Esophagus muscularis mucosa (tissue), 4 donors: ENCODE measurements at regions of chrX and their contacts with region 1.

Region 1: DNA sequence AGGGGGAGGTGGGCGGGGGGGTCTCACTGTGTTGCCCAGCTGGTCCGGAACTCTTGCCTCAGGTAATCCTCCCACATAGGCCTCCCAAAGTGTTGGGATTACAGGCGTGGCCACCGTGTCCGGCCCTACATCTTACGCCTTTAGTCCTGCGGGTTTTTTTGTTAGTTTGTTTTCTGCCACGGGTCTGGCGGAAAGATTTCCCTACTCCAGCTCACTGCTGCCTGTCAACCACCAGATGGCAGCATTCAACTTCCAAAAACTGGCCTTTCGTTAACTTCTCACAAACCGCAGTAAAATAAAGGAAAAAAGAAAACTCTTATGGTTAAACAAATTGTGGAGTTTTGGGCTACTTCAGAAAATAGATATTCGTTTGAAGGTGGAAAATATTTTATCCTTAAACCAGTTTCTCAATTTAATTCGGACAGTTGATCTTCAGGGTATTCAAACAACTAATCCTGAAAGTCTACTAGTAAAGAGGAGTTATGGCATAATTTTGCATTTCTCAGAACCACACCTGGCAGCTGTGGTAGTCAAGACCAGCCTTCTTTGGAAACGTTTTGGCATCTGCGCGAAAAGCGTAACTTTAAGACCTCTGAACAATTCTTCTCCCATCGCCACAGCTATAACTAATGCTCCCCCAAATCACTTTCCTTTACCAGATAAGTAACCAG is 41.1 kb downstream of the LUZP4 start:
- DNase-seq: no peak
- H3K4me3 ChIP-seq: peak overlapping the region in 3 of 4 donors; percentile 22 to 36 (median 32)
- H3K27ac ChIP-seq: peak overlapping the region in 1 of 4 donors; percentile 2
- H3K4me1 ChIP-seq: peaks cover 0 to 8% (median 5%) of the 10 kb centered on the region in 4 donors
- H3K27me3 ChIP-seq: no peaks in the 10 kb centered on the region
- CTCF ChIP-seq: peak; percentile 73 to 91 (median 85)
- EP300 ChIP-seq: no peak
- POLR2A ChIP-seq: no peak

Region 2: GRCh38 chrX:115560978-115561604 is 230.5 kb after region 1 on chrX and contains the start of gene PLS3:
- intact Hi-C with region 1: loop called (anchors 5 kb)
- DNase-seq: no peak
- H3K4me3 ChIP-seq: peak within 1 kb of the TSS; percentile 65 to 76 (median 71)
- H3K27ac ChIP-seq: peak within 1 kb of the TSS; percentile 87 to 92 (median 91)
- H3K4me1 ChIP-seq: peaks cover 13 to 45% (median 31%) of the 10 kb centered on the region in 4 donors
- H3K27me3 ChIP-seq: peaks cover 0 to 9% (median 0%) of the 10 kb centered on the region in 4 donors
- CTCF ChIP-seq: no peak
- EP300 ChIP-seq: no peak
- POLR2A ChIP-seq: peak; percentile 36
- total RNA-seq, gene PLS3: 76.8 to 84.0 (median 80.8) TPM

Region 3: DNA sequence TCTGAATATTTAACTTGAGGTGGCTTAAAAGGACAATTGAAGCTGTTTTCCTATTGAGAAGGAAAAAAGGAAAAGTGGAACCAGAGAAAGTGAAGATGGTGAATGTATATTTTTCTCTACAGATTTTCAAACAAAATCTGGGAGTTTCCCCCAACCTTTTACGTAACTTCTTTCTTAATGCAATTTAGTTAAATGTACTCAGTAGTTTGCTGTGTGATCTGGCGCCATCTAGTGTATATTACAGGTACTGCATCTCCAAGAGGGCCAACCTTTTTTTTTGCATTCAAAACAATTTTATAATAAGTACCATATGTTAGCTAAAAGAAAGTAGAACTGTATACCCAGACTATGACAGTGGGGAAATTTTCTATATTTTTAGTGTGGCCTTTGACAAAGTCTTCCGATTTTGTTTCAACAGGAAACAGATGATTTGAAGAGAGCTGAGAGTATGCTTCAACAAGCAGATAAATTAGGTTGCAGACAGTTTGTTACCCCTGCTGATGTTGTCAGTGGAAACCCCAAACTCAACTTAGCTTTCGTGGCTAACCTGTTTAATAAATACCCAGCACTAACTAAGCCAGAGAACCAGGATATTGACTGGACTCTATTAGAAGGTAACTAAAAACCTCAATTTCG is 312.4 kb after region 1 on chrX:
- intact Hi-C with region 1: loop called (anchors 1 kb)
- DNase-seq: no peak
- H3K4me3 ChIP-seq: no peak overlapping the region
- H3K27ac ChIP-seq: peak overlapping the region in 3 of 4 donors; percentile 8 to 53 (median 52)
- H3K4me1 ChIP-seq: peaks cover 0 to 15% (median 4%) of the 10 kb centered on the region in 4 donors
- H3K27me3 ChIP-seq: no peaks in the 10 kb centered on the region
- CTCF ChIP-seq: peak; percentile 86 to 99 (median 92)
- EP300 ChIP-seq: no peak
- POLR2A ChIP-seq: no peak

Region 4: GRCh38 chrX:115690511-115691216 is 360.0 kb after region 1 on chrX:
- intact Hi-C with region 1: loop called (anchors 2 kb)
- DNase-seq: no peak
- H3K4me3 ChIP-seq: peak overlapping the region in 2 of 4 donors; percentile 7 to 12
- H3K27ac ChIP-seq: peak overlapping the region; percentile 45 to 63 (median 47)
- H3K4me1 ChIP-seq: peaks cover 0 to 11% (median 7%) of the 10 kb centered on the region in 4 donors
- H3K27me3 ChIP-seq: no peaks in the 10 kb centered on the region
- CTCF ChIP-seq: peak; percentile 77 to 85 (median 77)
- EP300 ChIP-seq: no peak
- POLR2A ChIP-seq: no peak